HEK293T (cell line): ENCODE measurements at regions of chr19 and their contacts with region 1.

Region 1: GRCh38 chr19:1269065-1269477 is at the start of gene CIRBP:
- DNase-seq: peak; percentile 94

Region 2: DNA sequence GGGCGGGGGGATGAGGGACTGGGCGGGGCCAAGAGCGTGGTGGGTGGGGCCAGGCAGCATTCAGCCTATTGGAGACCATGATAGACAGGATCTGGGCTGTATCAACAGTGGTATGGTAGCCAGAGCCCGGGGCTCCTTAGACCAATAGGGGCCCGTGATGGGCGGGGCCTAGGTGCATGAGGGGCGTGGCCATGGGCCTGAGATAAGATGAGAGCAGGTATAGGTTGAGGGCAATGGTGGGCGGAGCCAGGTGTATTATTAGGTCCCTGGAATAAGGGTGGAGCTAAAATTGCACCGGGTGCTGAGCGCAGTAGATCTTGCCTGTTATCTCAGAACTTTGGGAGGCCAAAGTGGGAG is 223.8 kb before region 1 on chr19:
- CTCF ChIA-PET with region 1: no interaction called
- POLR2A ChIA-PET with region 1: interaction called, 12 read pairs
- DNase-seq: peak; percentile 98

Region 3: DNA sequence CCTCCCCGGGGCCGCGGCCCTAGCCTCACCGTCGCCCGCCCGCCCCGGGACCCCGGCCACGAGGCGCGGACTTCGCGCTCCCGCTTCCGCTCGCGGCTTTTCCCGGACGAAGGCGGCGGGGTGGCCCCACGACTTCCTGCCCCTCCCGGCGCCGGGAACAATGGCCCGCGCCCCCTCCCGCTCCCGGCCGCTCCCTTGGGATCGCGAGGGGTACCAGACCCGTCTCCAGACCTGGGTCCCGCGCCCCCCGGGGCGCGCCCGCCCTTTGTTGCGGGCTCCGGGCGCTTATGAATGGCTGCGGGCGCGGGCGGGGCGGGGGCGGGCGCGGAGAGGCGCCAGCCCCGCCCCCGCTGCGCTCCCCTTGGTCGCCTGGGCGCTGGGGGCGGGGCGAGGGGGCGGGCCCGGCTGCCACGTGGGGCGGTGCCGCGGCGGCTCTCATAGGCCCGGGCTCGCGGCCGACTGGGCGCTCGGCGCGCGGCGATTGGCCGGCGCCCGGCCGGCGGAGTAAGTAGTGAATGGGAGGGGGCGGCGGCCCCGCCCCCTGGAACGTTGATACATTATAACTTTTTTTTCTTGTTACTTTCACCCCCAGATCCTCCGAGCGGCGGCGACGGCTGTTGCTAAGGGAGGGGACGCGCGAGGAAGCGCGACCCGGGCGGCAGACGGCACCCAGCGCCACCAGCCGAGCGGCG is 19.6 kb before region 1 on chr19:
- CTCF ChIA-PET with region 1: interaction called, 149 read pairs
- POLR2A ChIA-PET with region 1: interaction called, 375 read pairs
- DNase-seq: peak; percentile 88

Region 4: GRCh38 chr19:1285737-1286360 is 16.8 kb after region 1 on chr19 and contains the start of gene EFNA2:
- CTCF ChIA-PET with region 1: interaction called, 3 read pairs
- POLR2A ChIA-PET with region 1: interaction called, 34 read pairs
- DNase-seq: peak; percentile 50

Region 5: GRCh38 chr19:1296575-1297271 is 27.7 kb after region 1 on chr19:
- CTCF ChIA-PET with region 1: no interaction called
- POLR2A ChIA-PET with region 1: no interaction called
- DNase-seq: no peak

Region 6: DNA sequence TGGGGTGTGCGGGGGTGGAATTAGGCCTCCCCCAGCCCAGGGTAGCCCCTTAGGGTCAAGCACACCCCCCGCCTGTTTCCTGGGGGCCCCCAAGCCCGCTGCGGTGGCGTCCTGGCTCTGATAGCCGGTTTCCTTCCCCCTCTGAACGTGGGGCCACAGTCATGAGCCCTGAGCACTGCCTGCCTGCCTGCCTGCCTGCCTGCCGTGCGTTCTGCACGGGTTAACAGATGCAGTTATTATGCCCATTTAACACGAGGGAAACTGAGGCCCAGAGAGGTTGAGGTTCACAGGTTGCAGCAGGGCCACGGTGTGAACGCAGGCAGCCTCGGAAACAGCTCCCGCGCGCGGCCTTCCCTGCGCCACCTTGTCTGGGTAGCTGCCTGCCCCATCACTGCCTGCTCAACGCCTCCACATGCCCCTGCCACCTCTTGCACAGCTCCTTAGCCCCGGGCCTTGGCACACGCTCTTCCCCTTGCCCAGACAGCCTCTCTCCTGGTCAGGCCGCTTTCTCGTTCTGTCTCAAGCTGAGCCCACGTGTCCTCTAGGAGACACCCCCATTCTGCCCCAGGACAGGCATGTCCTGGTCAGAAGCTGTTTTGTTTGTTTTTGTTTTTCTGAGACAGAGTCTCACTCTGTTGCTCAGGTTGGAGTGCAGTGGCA is 133.5 kb after region 1 on chr19:
- CTCF ChIA-PET with region 1: no interaction called
- POLR2A ChIA-PET with region 1: interaction called, 19 read pairs
- DNase-seq: no peak